ENCODE measurements at regions of chr14 and their contacts with region 1.

Region 1: DNA sequence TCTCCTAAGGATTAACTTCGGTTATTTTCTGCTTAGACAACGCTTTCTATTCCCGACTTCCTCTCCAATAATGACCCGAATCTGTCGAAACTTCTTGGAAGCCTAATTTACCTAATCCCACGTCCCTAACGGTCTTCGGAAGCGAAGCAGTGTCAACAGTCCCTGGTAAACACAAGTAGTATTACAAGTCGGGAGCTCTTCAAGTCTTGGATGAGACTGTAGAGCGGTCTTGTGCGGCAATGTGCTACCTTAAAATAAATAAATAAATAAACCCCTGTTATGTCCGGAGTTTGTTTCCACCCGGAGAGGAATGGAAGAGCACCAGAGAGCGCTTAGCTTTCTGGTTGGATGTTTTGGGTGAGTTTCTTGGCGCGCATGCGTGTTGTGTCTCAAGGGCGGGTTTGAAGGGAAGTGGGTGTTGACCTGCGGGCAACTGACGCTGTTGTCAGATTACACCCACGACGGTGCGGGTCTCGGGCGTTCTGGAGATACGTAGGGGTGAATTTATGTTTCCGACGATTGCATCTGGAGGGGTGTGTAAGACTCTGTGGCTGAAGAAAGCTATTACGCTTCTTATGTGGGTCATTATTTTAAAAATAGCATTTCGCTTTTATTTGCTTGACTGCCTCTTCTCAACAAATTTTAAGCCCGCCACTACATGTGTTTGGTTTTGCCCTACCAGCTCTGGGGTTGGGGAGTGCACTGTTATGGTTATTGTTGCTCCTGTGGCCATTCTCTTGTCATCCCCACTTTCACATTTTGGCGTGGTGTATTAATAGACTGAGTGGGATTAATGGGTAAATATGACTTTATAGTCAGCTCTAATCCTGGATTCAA is at the starts of genes KIAA0586 and TIMM9:
- DNase-seq: peak; percentile 97
- ATAC-seq: peak; percentile 93
- H3K4me3 ChIP-seq: peak within 1 kb of the TSS; percentile 82 to 84 (median 83)
- H3K27ac ChIP-seq: peak within 1 kb of the TSS; percentile 96
- H3K4me1 ChIP-seq: peaks cover 40% of the 10 kb centered on the region
- H3K27me3 ChIP-seq: no peaks in the 10 kb centered on the region; a peak in 1 of 5 replicates
- CTCF ChIP-seq: no peak
- EP300 ChIP-seq: peak in 1 of 2 experiments; percentile 56; a peak in 2 of 4 replicates
- POLR2A ChIP-seq: peak; percentile 92
- RAD21 ChIP-seq: 0 out of 2 replicates have a peak, but pooled peaks have one; percentile 20
- total RNA-seq, gene KIAA0586: 25.2 and 37.6 TPM in 2 replicates
- total RNA-seq, gene TIMM9: 42.5 and 58.2 TPM in 2 replicates

Region 2: DNA sequence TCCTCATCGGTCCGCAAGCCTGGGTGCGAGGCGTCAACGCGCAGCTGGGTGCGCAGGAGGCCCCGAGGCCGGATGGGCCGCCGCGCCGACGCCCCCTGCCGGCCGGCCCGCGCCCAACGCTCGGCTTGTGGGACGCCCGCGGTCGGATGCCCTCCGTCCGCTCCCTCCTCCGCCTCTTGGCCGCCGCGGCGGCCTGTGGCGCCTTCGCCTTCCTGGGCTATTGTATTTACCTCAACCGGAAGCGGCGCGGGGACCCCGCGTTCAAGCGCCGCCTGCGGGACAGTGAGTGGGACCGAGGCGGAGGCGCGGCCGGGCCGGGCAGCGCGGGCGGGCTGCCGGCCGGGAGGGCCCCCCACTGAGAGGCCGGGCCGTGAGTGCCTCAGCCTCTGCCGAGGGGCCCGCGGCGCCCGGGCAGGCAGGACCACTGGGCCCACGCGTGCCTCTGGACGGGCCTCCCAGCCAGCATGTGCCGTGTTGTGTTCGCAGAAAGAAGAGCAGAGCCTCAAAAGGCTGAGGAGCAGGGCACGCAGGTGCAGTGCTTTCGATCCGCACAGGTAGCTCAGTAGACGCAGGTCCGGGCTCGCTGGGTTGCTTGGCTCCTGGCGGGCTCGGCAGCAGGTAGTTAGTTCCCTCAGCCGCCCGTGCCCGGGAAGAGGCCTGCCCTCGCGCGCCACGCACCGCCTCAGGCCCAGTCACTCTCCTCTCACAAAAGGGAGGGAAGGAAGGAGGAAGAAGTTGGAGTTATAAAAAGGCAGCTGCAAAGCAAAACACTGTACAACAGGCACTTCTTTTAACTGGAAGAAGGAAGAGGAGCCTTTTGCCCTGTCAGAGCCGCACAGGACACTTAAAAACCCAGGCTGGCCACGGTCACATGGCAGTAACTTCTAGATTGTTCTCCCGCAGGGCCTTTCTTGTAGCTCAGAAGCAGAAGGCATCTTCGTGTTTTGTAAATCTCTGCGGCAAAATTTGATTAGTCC is 31.4 kb before region 1 on chr14 and contains the start of gene TOMM20L:
- CTCF ChIA-PET with region 1: interaction called, 3 read pairs
- POLR2A ChIA-PET with region 1: interaction called, 19 read pairs
- in situ Hi-C with region 1: no loop called
- intact Hi-C with region 1: loop called (anchors 2 kb)
- DNase-seq: peak; percentile 72
- ATAC-seq: peak; percentile 92
- H3K4me3 ChIP-seq: peak within 1 kb of the TSS; percentile 63 to 83 (median 75)
- H3K27ac ChIP-seq: peak within 1 kb of the TSS; percentile 93
- H3K4me1 ChIP-seq: peaks cover 21% of the 10 kb centered on the region
- H3K27me3 ChIP-seq: no peaks in the 10 kb centered on the region; a peak in 1 of 5 replicates
- CTCF ChIP-seq: peak; percentile 73
- EP300 ChIP-seq: no peak
- POLR2A ChIP-seq: peak in 1 of 2 experiments; percentile 28; a peak in 3 of 4 replicates
- RAD21 ChIP-seq: peak; percentile 82
- total RNA-seq, gene TOMM20L: 0.46 TPM in 1 of 2 replicates, not detected in the other

Region 3: GRCh38 chr14:58465401-58465800 is 37.9 kb after region 1 on chr14:
- CTCF ChIA-PET with region 1: no interaction called
- POLR2A ChIA-PET with region 1: no interaction called
- in situ Hi-C with region 1: no loop called
- intact Hi-C with region 1: no loop called
- DNase-seq: peak; percentile 32
- ATAC-seq: no peak; the same call in 2 of the 3 replicates
- H3K4me3 ChIP-seq: no peak overlapping the region
- H3K27ac ChIP-seq: no peak overlapping the region
- H3K4me1 ChIP-seq: peaks cover 6% of the 10 kb centered on the region; the same call in 1 of the 2 replicates
- H3K27me3 ChIP-seq: no peaks in the 10 kb centered on the region
- CTCF ChIP-seq: no peak
- EP300 ChIP-seq: no peak
- POLR2A ChIP-seq: no peak
- RAD21 ChIP-seq: no peak